Mammary epithelial cell (primary cell): ENCODE measurements at regions of chr2 and their contacts with region 1.

Region 1: GRCh38 chr2:233061591-233062450 is 1.7 kb downstream of the INPP5D start:
- DNase-seq: no peak
- H3K4me3 ChIP-seq: no peak overlapping the region
- H3K27ac ChIP-seq: no peak overlapping the region
- H3K4me1 ChIP-seq: peaks cover 2% of the 10 kb centered on the region
- H3K27me3 ChIP-seq: no peaks in the 10 kb centered on the region
- CTCF ChIP-seq: no peak

Region 2: GRCh38 chr2:232876078-232876977 is 185.5 kb before region 1 on chr2:
- CTCF ChIA-PET with region 1: no interaction called
- dilution Hi-C with region 1: loop called (anchors 5 kb)
- in situ Hi-C with region 1: no loop called
- intact Hi-C with region 1: no loop called
- DNase-seq: peak; percentile 14
- H3K4me3 ChIP-seq: peak overlapping the region in 2 of 3 experiments; percentile 46 to 54
- H3K27ac ChIP-seq: no peak overlapping the region
- H3K4me1 ChIP-seq: peaks cover 15% of the 10 kb centered on the region
- H3K27me3 ChIP-seq: no peaks in the 10 kb centered on the region
- CTCF ChIP-seq: peak in 1 of 2 donors; percentile 34

Region 3: GRCh38 chr2:232920055-232920454 is 141.8 kb before region 1 on chr2:
- CTCF ChIA-PET with region 1: no interaction called
- dilution Hi-C with region 1: loop called (anchors 5 kb)
- in situ Hi-C with region 1: no loop called
- intact Hi-C with region 1: no loop called
- DNase-seq: no peak
- H3K4me3 ChIP-seq: no peak overlapping the region
- H3K27ac ChIP-seq: no peak overlapping the region
- H3K4me1 ChIP-seq: no peaks in the 10 kb centered on the region
- H3K27me3 ChIP-seq: peaks cover 4% of the 10 kb centered on the region
- CTCF ChIP-seq: no peak

Region 4: GRCh38 chr2:232974396-232974795 is 87.4 kb before region 1 on chr2:
- CTCF ChIA-PET with region 1: no interaction called
- dilution Hi-C with region 1: no loop called
- in situ Hi-C with region 1: no loop called
- intact Hi-C with region 1: no loop called
- DNase-seq: no peak
- H3K4me3 ChIP-seq: no peak overlapping the region
- H3K27ac ChIP-seq: no peak overlapping the region
- H3K4me1 ChIP-seq: no peaks in the 10 kb centered on the region
- H3K27me3 ChIP-seq: no peaks in the 10 kb centered on the region
- CTCF ChIP-seq: no peak

Region 5: DNA sequence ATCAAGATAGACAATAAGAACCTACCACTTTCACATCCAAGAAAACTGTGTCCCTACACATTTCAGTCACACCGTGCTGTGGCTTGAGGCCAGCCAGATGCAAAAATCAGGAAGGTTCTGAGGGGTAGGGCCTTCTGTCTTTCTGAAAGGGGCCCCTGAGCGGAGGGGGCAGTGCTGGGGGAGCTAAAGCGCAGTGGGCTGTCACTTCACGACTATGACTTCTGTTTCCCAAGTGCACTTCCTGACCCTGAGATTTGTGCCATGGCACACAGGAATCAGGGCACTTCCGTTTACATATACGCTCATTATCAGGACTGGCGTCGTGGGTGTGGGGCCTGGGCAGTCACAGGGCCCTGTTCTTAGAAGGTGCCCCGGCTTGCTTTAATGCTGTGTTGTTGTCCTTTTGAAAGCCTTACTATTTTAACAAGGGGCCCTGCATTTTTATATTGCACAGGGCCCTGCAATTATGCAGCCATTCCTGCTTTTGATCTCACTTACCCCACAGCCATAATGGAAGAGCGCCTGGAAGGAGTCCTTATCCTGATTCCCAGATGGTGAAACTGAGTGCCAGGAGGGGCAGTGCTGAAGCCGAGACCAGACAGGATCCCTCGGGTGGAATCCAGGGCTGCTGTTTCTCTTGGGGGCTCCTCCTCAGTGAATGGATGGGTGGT is 49.4 kb before region 1 on chr2:
- CTCF ChIA-PET with region 1: no interaction called
- dilution Hi-C with region 1: loop called (anchors 5 kb)
- in situ Hi-C with region 1: no loop called
- intact Hi-C with region 1: no loop called
- DNase-seq: no peak
- H3K4me3 ChIP-seq: no peak overlapping the region
- H3K27ac ChIP-seq: no peak overlapping the region
- H3K4me1 ChIP-seq: no peaks in the 10 kb centered on the region
- H3K27me3 ChIP-seq: no peaks in the 10 kb centered on the region
- CTCF ChIP-seq: no peak